H1 (cell line): ENCODE measurements at regions of chr11 and their contacts with region 1.

Region 1: DNA sequence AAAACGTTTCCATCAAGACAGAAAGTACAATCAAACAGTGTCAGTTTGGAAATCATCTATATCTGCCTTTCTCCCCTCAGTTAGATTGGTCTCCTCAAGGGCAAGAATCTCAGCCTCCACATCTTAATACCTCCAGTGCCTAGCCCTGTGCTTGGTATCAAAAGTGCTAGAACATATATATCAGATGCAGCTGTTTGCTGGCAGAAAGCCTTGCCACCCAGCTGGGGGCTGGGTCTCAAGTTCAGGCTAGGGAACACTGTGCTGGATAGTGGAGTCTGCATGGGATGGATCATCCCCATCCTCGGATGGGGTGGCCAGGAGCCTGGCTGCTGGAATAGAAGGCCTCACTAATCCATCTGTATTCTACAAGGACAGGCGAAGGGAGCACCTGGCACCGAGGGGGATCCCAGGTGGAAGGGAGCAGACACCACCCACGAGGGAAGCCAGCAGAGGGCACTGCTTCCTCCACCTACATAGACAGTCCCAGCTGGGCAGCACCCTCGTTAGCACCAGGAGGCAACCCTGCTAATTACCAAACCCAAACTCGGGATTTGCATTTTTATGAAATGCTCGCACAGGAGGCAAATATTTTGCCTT is 602.2 kb downstream of the BUD13 start:
- DNase-seq: peak in 1 of 2 experiments; percentile 53
- H3K4me3 ChIP-seq: no peak overlapping the region
- H3K27ac ChIP-seq: no peak overlapping the region
- H3K4me1 ChIP-seq: peaks cover 0 to 7% (median under 1%) of the 10 kb centered on the region in 4 experiments; a peak in 3 of 7 replicates
- H3K27me3 ChIP-seq: no peaks in the 10 kb centered on the region
- CTCF ChIP-seq: peak; percentile 62 to 74 (median 68)
- EP300 ChIP-seq: no peak
- POLR2A ChIP-seq: no peak
- RAD21 ChIP-seq: peak; percentile 50 to 66

Region 2: GRCh38 chr11:115860261-115860660 is 310.4 kb before region 1 on chr11:
- CTCF ChIA-PET with region 1: no interaction called
- POLR2A ChIA-PET with region 1: no interaction called
- DNase-seq: no peak
- H3K4me3 ChIP-seq: no peak overlapping the region
- H3K27ac ChIP-seq: no peak overlapping the region
- H3K4me1 ChIP-seq: no peaks in the 10 kb centered on the region
- H3K27me3 ChIP-seq: no peaks in the 10 kb centered on the region
- CTCF ChIP-seq: no peak
- EP300 ChIP-seq: no peak
- POLR2A ChIP-seq: no peak
- RAD21 ChIP-seq: no peak

Region 3: GRCh38 chr11:116112087-116112935 is 58.3 kb before region 1 on chr11:
- CTCF ChIA-PET with region 1: no interaction called
- POLR2A ChIA-PET with region 1: no interaction called
- DNase-seq: no peak
- H3K4me3 ChIP-seq: no peak overlapping the region
- H3K27ac ChIP-seq: no peak overlapping the region
- H3K4me1 ChIP-seq: no peaks in the 10 kb centered on the region
- H3K27me3 ChIP-seq: peaks cover 20 to 46% (median 38%) of the 10 kb centered on the region in 4 experiments
- CTCF ChIP-seq: no peak
- EP300 ChIP-seq: no peak
- POLR2A ChIP-seq: no peak
- RAD21 ChIP-seq: no peak

Region 4: DNA sequence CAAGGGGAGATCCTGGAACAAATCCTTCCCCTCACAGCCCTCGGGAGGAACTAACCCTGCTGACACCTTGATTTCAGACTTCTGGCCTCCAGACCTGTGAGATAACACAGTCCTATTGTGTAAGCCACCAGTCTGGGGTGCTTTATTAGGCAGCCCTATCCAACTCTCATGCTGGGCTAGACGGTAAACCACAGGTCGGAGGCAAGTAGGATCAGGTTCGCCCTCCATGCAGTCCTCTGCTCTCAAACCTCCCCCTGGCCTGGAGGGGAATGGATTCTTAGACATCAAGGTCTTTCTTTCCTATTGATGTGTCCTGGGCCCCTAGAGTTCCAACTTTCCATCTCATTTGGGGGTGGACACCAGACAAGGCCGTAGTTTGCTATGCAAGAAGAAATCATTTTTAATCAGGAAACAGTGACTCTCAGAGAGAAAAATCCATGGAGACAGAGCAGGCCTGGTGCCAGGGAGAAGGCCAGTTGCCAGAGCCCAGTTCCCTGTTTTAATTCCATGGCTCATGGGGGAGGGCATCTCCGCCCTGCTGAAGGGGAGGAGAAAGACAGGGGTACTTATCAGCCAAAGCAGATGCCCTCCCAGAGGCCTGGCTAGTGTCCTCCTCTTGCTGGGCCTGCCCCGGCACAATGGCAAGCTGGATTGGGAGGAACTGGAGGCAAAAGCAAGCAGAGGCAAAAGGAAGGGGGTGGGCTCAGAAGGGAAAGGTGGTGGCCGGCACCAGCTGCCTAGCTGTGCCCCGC is 10.0 kb after region 1 on chr11:
- CTCF ChIA-PET with region 1: interaction called, 47 read pairs
- POLR2A ChIA-PET with region 1: no interaction called
- DNase-seq: no peak
- H3K4me3 ChIP-seq: no peak overlapping the region
- H3K27ac ChIP-seq: no peak overlapping the region; the same call in 1 of the 2 replicates
- H3K4me1 ChIP-seq: peaks cover 2 to 16% (median 13%) of the 10 kb centered on the region in 4 experiments
- H3K27me3 ChIP-seq: no peaks in the 10 kb centered on the region
- CTCF ChIP-seq: no peak
- EP300 ChIP-seq: no peak
- POLR2A ChIP-seq: no peak
- RAD21 ChIP-seq: no peak

Region 5: GRCh38 chr11:116193321-116194131 is 22.9 kb after region 1 on chr11:
- CTCF ChIA-PET with region 1: interaction called, 45 read pairs
- POLR2A ChIA-PET with region 1: interaction called, 3 read pairs
- DNase-seq: peak in 1 of 2 experiments; percentile 71
- H3K4me3 ChIP-seq: peak overlapping the region; percentile 58 to 78 (median 66)
- H3K27ac ChIP-seq: no peak overlapping the region
- H3K4me1 ChIP-seq: peaks cover 3 to 16% (median 11%) of the 10 kb centered on the region in 4 experiments
- H3K27me3 ChIP-seq: peaks cover 0 to 10% (median 3%) of the 10 kb centered on the region in 4 experiments; a peak in 4 of 7 replicates
- CTCF ChIP-seq: no peak
- EP300 ChIP-seq: 0 out of 3 replicates have a peak, but pooled peaks of 1 of the 2 experiments have one; percentile 10
- POLR2A ChIP-seq: no peak
- RAD21 ChIP-seq: 0 out of 4 replicates have a peak, but pooled peaks of 1 of the 2 experiments have one; percentile 2